ENCODE measurements at regions of chr3 and their contacts with region 1.

Region 1: GRCh38 chr3:13012228-13012691 is 61.0 kb downstream of the IQSEC1 start:
- DNase-seq: peak in 5 of 9 experiments; percentile 41 to 89 (median 70)
- ATAC-seq: peak; percentile 17
- H3K4me3 ChIP-seq: peak overlapping the region; percentile 4 to 12
- H3K4me3 Mint-ChIP-seq: peak overlapping the region; percentile 67
- H3K27ac ChIP-seq: peak overlapping the region; percentile 74 to 98
- H3K27ac Mint-ChIP-seq: peak overlapping the region; percentile 97
- H3K4me1 ChIP-seq: peaks cover 96% of the 10 kb centered on the region
- H3K4me1 Mint-ChIP-seq: peaks cover 80% of the 10 kb centered on the region
- H3K27me3 ChIP-seq: no peaks in the 10 kb centered on the region
- H3K27me3 Mint-ChIP-seq: no peaks in the 10 kb centered on the region
- CTCF ChIP-seq: no peak

Region 2: DNA sequence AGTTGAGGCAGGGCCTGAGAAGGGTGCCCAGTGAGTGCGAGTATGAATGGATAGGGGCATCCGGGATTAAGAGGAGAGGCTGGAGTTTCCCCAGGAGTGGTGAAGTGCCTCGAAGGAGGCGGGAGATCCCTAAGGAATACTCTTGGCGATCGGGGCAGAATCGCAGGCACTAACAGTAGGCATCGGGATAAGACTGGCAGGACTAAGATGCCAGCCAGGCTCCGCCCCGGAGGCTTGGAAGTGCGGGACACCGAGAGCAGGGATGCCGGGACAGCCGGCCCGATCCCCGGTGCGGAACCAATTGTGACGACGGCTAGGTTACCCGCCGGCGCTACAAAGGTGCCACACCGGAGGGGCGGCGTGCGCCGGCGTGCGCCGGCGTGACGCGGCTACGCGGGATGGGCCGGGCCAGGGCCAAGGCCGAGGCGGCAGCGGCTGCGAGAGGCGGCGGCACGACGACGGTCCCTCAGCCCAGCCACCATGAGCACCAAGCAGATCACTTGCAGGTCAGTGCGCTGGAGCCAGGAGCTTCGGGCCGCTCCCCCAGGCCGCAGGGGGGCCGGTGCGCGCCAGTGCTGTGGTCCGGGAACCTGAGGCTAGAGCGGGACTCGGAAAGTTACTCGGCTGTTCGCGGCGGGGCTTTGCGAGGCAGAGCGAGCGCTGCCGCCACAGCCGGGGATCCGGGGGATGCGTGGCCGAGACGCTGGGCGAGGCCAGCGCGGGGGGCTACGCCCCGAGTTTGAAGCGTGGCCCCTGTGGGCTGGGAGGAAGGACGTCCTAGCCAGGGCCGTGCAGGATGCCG is 455.4 kb before region 1 on chr3 and contains the start of gene MKRN2:
- CTCF ChIA-PET with region 1: no interaction called
- POLR2A ChIA-PET with region 1: no interaction called
- intact Hi-C with region 1: loop called in 1 of 2 experiments (anchors 10 kb)
- DNase-seq: peak; percentile 67 to 94 (median 83)
- ATAC-seq: peak; percentile 93
- H3K4me3 ChIP-seq: peak within 1 kb of the TSS; percentile 73 to 86
- H3K4me3 Mint-ChIP-seq: peak within 1 kb of the TSS; percentile 89
- H3K27ac ChIP-seq: peak within 1 kb of the TSS; percentile 86 to 92
- H3K27ac Mint-ChIP-seq: peak within 1 kb of the TSS; percentile 90
- H3K4me1 ChIP-seq: peaks cover 49% of the 10 kb centered on the region
- H3K4me1 Mint-ChIP-seq: peaks cover 60% of the 10 kb centered on the region
- H3K27me3 ChIP-seq: peaks cover 6 to 16% of the 10 kb centered on the region in 2 experiments
- H3K27me3 Mint-ChIP-seq: peaks cover 24% of the 10 kb centered on the region
- CTCF ChIP-seq: no peak
- total RNA-seq, gene MKRN2: 24.8 to 25.5 TPM

Region 3: GRCh38 chr3:12830785-12831156 is 181.5 kb before region 1 on chr3:
- CTCF ChIA-PET with region 1: no interaction called
- POLR2A ChIA-PET with region 1: no interaction called
- intact Hi-C with region 1: no loop called
- DNase-seq: no peak
- ATAC-seq: no peak
- H3K4me3 ChIP-seq: no peak overlapping the region
- H3K4me3 Mint-ChIP-seq: no peak overlapping the region
- H3K27ac ChIP-seq: no peak overlapping the region
- H3K27ac Mint-ChIP-seq: peak overlapping the region; percentile 72
- H3K4me1 ChIP-seq: no peaks in the 10 kb centered on the region
- H3K4me1 Mint-ChIP-seq: no peaks in the 10 kb centered on the region
- H3K27me3 ChIP-seq: no peaks in the 10 kb centered on the region
- H3K27me3 Mint-ChIP-seq: no peaks in the 10 kb centered on the region
- CTCF ChIP-seq: no peak

Region 4: GRCh38 chr3:12967606-12968351 is 44.5 kb before region 1 on chr3:
- CTCF ChIA-PET with region 1: no interaction called
- POLR2A ChIA-PET with region 1: interaction called, 8 read pairs
- intact Hi-C with region 1: loop called in 1 of 2 experiments (anchors 1 kb)
- DNase-seq: peak; percentile 82 to 95 (median 89)
- ATAC-seq: peak; percentile 97
- H3K4me3 ChIP-seq: peak overlapping the region; percentile 42 to 63
- H3K4me3 Mint-ChIP-seq: peak overlapping the region; percentile 82
- H3K27ac ChIP-seq: no peak overlapping the region
- H3K27ac Mint-ChIP-seq: peak overlapping the region; percentile 69
- H3K4me1 ChIP-seq: peaks cover 59% of the 10 kb centered on the region
- H3K4me1 Mint-ChIP-seq: peaks cover 74% of the 10 kb centered on the region
- H3K27me3 ChIP-seq: no peaks in the 10 kb centered on the region
- H3K27me3 Mint-ChIP-seq: no peaks in the 10 kb centered on the region
- CTCF ChIP-seq: no peak

Region 5: GRCh38 chr3:12994607-12995388 is 17.5 kb before region 1 on chr3:
- CTCF ChIA-PET with region 1: interaction called, 66 read pairs
- POLR2A ChIA-PET with region 1: interaction called, 14 read pairs
- intact Hi-C with region 1: loop called (anchors 1 kb)
- DNase-seq: peak; percentile 71 to 93 (median 86)
- ATAC-seq: peak; percentile 84
- H3K4me3 ChIP-seq: peak overlapping the region; percentile 81 to 95
- H3K4me3 Mint-ChIP-seq: peak overlapping the region; percentile 98
- H3K27ac ChIP-seq: peak overlapping the region; percentile 65 to 85
- H3K27ac Mint-ChIP-seq: peak overlapping the region; percentile 96
- H3K4me1 ChIP-seq: peaks cover 39% of the 10 kb centered on the region
- H3K4me1 Mint-ChIP-seq: peaks cover 62% of the 10 kb centered on the region
- H3K27me3 ChIP-seq: no peaks in the 10 kb centered on the region
- H3K27me3 Mint-ChIP-seq: no peaks in the 10 kb centered on the region
- CTCF ChIP-seq: peak; percentile 93

Region 6: DNA sequence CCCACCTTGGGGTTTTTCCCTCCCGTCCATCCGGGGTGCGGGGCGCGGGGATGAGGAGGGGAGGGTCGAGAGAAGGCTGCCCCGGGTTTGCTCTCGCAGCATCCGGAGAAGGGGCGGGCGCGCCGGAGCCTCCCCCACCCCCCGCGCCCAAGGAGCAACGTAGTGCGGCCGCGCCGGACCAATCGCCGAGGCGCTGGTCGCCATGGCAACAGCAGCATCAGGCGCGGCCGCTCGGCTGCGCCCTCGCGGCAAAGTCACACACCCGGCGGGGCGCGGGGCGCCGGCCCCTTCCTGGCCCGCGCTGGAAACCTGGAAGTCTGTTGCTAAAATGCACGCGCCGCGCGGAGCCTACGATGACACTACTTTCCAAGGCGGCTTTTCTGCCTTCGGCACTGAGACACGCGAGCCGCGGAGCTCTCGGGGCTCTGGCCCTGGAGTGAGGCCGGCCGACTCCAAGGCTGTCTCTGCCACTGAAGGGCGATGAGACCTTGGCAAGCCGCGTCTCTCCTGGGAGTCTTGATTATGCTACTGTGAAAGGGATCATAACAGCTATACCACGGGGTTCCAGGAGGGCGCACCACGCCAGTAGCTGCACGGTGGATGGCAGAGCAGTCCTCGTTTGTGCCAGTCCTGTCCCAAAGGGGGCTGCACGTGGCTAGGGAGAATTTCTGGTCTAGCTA is 61.2 kb after region 1 on chr3 and contains the start of gene IQSEC1:
- CTCF ChIA-PET with region 1: no interaction called
- POLR2A ChIA-PET with region 1: no interaction called
- intact Hi-C with region 1: loop called (anchors 2 to 5 kb)
- DNase-seq: peak; percentile 46 to 93 (median 76)
- ATAC-seq: peak; percentile 74
- H3K4me3 ChIP-seq: peak within 1 kb of the TSS; percentile 49 to 56
- H3K4me3 Mint-ChIP-seq: peak within 1 kb of the TSS; percentile 85
- H3K27ac ChIP-seq: peak within 1 kb of the TSS; percentile 32 to 74
- H3K27ac Mint-ChIP-seq: peak within 1 kb of the TSS; percentile 68
- H3K4me1 ChIP-seq: peaks cover 56% of the 10 kb centered on the region
- H3K4me1 Mint-ChIP-seq: peaks cover 48% of the 10 kb centered on the region
- H3K27me3 ChIP-seq: peaks cover 0 to 5% of the 10 kb centered on the region in 2 experiments
- H3K27me3 Mint-ChIP-seq: no peaks in the 10 kb centered on the region
- CTCF ChIP-seq: no peak
- total RNA-seq, gene IQSEC1: 71.2 to 79.0 TPM

Region 7: DNA sequence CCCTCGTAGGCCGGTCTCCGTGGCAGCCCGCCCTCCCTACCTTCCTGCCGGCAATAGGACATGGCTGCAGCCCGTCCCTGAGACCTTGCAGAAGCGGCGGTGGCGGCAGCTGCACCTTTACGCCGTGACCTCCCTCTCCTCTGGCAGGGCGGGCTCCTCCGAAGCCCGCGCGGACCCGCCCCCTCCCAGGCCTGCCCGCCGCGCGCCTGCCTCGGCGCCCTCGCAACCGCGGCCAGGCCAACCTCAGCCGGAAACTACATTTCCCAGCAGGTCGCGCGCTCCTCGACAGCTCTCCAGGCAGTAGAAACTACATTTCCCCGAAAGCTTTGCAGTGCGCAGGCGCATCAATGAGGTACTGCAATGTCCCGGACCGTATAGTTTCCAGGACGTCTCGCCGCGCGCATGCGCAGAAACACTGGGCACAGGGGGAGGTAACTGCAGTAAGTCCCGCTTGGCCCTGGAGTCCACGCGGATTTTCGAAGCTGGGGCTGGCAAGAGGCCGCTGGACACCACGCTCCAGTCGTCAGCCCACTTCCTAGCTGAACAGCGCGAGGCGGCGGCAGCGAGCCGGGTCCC is 1112.4 kb after region 1 on chr3 and contains the starts of genes CHCHD4 and TMEM43:
- CTCF ChIA-PET with region 1: no interaction called
- POLR2A ChIA-PET with region 1: no interaction called
- intact Hi-C with region 1: loop called in 1 of 2 experiments (anchors 10 kb)
- DNase-seq: peak; percentile 95 to 100 (median 98)
- ATAC-seq: peak; percentile 87
- H3K4me3 ChIP-seq: peak within 1 kb of the TSS; percentile 95 to 100
- H3K4me3 Mint-ChIP-seq: peak within 1 kb of the TSS; percentile 96
- H3K27ac ChIP-seq: peak within 1 kb of the TSS; percentile 89 to 92
- H3K27ac Mint-ChIP-seq: peak within 1 kb of the TSS; percentile 93
- H3K4me1 ChIP-seq: peaks cover 30% of the 10 kb centered on the region
- H3K4me1 Mint-ChIP-seq: peaks cover 56% of the 10 kb centered on the region
- H3K27me3 ChIP-seq: no peaks in the 10 kb centered on the region
- H3K27me3 Mint-ChIP-seq: no peaks in the 10 kb centered on the region
- CTCF ChIP-seq: no peak
- total RNA-seq, gene CHCHD4: 0.71 to 1.7 TPM
- total RNA-seq, gene TMEM43: 20.1 to 24.3 TPM